ENCODE measurements at regions of chr19 and their contacts with region 1.

Region 1: GRCh38 chr19:39119554-39120229 is 5.9 kb upstream of the PAK4 start:
- DNase-seq: no peak
- H3K4me3 ChIP-seq: no peak overlapping the region
- H3K27ac ChIP-seq: no peak overlapping the region
- H3K4me1 ChIP-seq: peaks cover 0 to 9% (median under 1%) of the 10 kb centered on the region in 4 donors
- H3K27me3 ChIP-seq: peaks cover 0 to 29% of the 10 kb centered on the region in 2 donors
- CTCF ChIP-seq: no peak

Region 2: GRCh38 chr19:38877781-38878574 is 241.7 kb before region 1 on chr19 and contains the start of gene RINL:
- intact Hi-C with region 1: no loop called
- DNase-seq: no peak
- H3K4me3 ChIP-seq: no peak within 1 kb of the TSS
- H3K27ac ChIP-seq: no peak within 1 kb of the TSS
- H3K4me1 ChIP-seq: no peaks in the 10 kb centered on the region
- H3K27me3 ChIP-seq: no peaks in the 10 kb centered on the region
- CTCF ChIP-seq: no peak

Region 3: GRCh38 chr19:39070888-39071287 is 48.8 kb before region 1 on chr19:
- intact Hi-C with region 1: no loop called
- DNase-seq: no peak
- H3K4me3 ChIP-seq: no peak overlapping the region
- H3K27ac ChIP-seq: no peak overlapping the region
- H3K4me1 ChIP-seq: no peaks in the 10 kb centered on the region
- H3K27me3 ChIP-seq: peaks cover 0 to 18% of the 10 kb centered on the region in 2 donors
- CTCF ChIP-seq: no peak

Region 4: DNA sequence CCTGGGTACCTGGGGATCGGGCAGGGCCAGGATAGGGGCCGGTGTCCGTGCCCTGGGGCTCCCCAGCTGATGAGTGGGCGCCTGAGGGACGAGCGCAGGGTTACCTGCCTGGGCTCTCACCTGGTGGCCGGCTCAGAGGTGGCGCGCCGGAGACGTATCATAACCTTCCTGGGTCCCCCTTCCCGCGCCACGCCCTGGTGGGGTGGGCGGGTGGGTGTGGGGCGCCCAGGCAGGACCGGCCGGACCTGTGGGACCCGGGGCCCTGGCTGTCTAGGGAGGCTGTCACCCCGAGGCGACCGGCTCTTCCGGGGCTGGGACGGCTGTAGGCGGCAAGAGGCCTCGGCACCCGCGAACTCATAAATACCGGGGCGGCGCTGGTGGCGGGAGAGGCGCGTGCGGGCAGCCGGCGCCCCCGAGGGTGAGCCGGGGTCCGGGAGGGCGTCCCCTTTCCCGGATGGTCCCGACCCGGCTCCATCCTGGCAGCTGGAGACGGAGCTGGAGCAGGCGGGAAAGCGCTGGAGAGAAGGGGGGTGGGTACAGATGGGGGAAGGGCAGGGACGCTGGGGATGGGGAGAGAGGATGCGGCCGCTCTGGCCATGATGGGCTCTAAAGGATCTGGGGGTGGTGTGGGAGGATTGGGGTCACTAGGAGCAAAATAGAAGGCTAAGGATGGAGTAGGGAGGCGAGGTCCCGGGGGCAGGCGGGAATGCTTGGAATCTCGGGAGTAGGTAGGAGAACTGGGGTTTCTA is 35.5 kb before region 1 on chr19 and contains the start of gene ACP7:
- intact Hi-C with region 1: no loop called
- DNase-seq: no peak
- H3K4me3 ChIP-seq: no peak within 1 kb of the TSS
- H3K27ac ChIP-seq: no peak within 1 kb of the TSS
- H3K4me1 ChIP-seq: peaks cover 0 to 15% (median 9%) of the 10 kb centered on the region in 4 donors
- H3K27me3 ChIP-seq: peaks cover 0 to 69% of the 10 kb centered on the region in 2 donors
- CTCF ChIP-seq: no peak

Region 5: GRCh38 chr19:39328046-39328705 is 208.5 kb after region 1 on chr19:
- intact Hi-C with region 1: loop called (anchors 2 kb)
- DNase-seq: peak; percentile 83 to 84
- H3K4me3 ChIP-seq: no peak overlapping the region
- H3K27ac ChIP-seq: no peak overlapping the region
- H3K4me1 ChIP-seq: no peaks in the 10 kb centered on the region
- H3K27me3 ChIP-seq: peaks cover 0 to 25% of the 10 kb centered on the region in 2 donors
- CTCF ChIP-seq: peak; percentile 90 to 95

Measured in tibial artery (tissue), 4 donors.